CD8-positive, alpha-beta T cell (primary cell): ENCODE measurements at regions of chr5 and their contacts with region 1.

Region 1: DNA sequence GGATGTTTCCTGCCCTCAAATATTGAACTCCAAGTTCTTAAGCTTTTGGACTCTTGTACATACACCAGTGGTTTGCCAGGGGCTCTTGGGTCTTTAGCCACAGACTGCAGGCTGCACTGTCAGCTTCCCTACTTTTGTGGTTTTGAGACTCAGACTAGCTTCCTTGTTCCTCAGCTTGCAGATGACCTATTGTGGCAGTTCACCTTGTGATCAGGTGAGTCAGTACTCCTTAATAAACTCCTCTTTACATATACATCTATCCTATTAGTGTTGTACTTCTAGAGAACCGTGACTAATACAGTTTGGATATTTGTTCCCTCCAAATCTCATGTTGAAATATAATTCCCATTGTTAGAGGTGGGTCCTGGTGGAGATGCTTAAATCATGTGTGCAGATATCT is 681.9 kb upstream of the ARRDC3 start:
- DNase-seq: no peak
- ATAC-seq: no peak
- H3K4me3 ChIP-seq: no peak overlapping the region
- H3K4me3 Mint-ChIP-seq: no peak overlapping the region
- H3K27ac ChIP-seq: no peak overlapping the region
- H3K27ac Mint-ChIP-seq: no peak overlapping the region
- H3K4me1 ChIP-seq: no peaks in the 10 kb centered on the region
- H3K4me1 Mint-ChIP-seq: no peaks in the 10 kb centered on the region
- H3K27me3 ChIP-seq: no peaks in the 10 kb centered on the region
- H3K27me3 Mint-ChIP-seq: no peaks in the 10 kb centered on the region
- CTCF ChIP-seq: no peak

Region 2: GRCh38 chr5:92081958-92082712 is 17.1 kb after region 1 on chr5:
- CTCF ChIA-PET with region 1: no interaction called
- POLR2A ChIA-PET with region 1: no interaction called
- intact Hi-C with region 1: no loop called
- DNase-seq: no peak
- ATAC-seq: no peak
- H3K4me3 ChIP-seq: no peak overlapping the region
- H3K4me3 Mint-ChIP-seq: no peak overlapping the region
- H3K27ac ChIP-seq: no peak overlapping the region
- H3K27ac Mint-ChIP-seq: no peak overlapping the region
- H3K4me1 ChIP-seq: no peaks in the 10 kb centered on the region
- H3K4me1 Mint-ChIP-seq: no peaks in the 10 kb centered on the region
- H3K27me3 ChIP-seq: no peaks in the 10 kb centered on the region
- H3K27me3 Mint-ChIP-seq: no peaks in the 10 kb centered on the region
- CTCF ChIP-seq: no peak

Region 3: DNA sequence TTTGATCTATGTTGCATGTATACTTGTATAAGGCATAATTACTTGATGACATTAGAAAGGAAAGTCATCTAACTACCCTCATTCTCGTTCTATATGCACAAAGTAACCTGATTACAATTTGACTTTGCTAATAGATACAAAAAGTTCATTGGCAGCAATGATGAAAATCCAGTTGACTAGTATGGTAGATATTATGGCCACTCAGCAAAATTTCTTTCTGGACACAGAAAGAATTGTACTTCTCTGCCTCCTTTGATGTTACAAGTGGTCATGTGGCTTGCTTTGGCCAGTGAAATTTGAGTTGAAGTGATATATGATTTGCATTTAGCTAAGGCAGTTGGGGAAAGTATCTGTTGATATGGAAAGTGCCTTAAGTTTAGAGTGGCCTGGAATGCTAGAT is 41.8 kb after region 1 on chr5:
- CTCF ChIA-PET with region 1: no interaction called
- POLR2A ChIA-PET with region 1: no interaction called
- intact Hi-C with region 1: loop called in 1 of 2 experiments (anchors 1 kb)
- DNase-seq: no peak
- ATAC-seq: no peak
- H3K4me3 ChIP-seq: no peak overlapping the region
- H3K4me3 Mint-ChIP-seq: no peak overlapping the region
- H3K27ac ChIP-seq: no peak overlapping the region
- H3K27ac Mint-ChIP-seq: no peak overlapping the region
- H3K4me1 ChIP-seq: no peaks in the 10 kb centered on the region
- H3K4me1 Mint-ChIP-seq: no peaks in the 10 kb centered on the region
- H3K27me3 ChIP-seq: no peaks in the 10 kb centered on the region
- H3K27me3 Mint-ChIP-seq: no peaks in the 10 kb centered on the region
- CTCF ChIP-seq: no peak